ENCODE measurements at regions of chr4 and their contacts with region 1.

Region 1: GRCh38 chr4:185754961-185755360 is 57.0 kb downstream of the SORBS2 start:
- DNase-seq: no peak
- ATAC-seq: no peak

Region 2: GRCh38 chr4:185534866-185535611 is 219.9 kb before region 1 on chr4 and contains the start of gene PDLIM3:
- intact Hi-C with region 1: no loop called
- DNase-seq: peak; percentile 82
- ATAC-seq: peak; percentile 91
- total RNA-seq, gene PDLIM3: 208 TPM

Region 3: GRCh38 chr4:185656467-185656931 is 98.5 kb before region 1 on chr4:
- intact Hi-C with region 1: loop called (anchors 10 kb)
- DNase-seq: peak; percentile 62
- ATAC-seq: peak; percentile 68

Region 4: DNA sequence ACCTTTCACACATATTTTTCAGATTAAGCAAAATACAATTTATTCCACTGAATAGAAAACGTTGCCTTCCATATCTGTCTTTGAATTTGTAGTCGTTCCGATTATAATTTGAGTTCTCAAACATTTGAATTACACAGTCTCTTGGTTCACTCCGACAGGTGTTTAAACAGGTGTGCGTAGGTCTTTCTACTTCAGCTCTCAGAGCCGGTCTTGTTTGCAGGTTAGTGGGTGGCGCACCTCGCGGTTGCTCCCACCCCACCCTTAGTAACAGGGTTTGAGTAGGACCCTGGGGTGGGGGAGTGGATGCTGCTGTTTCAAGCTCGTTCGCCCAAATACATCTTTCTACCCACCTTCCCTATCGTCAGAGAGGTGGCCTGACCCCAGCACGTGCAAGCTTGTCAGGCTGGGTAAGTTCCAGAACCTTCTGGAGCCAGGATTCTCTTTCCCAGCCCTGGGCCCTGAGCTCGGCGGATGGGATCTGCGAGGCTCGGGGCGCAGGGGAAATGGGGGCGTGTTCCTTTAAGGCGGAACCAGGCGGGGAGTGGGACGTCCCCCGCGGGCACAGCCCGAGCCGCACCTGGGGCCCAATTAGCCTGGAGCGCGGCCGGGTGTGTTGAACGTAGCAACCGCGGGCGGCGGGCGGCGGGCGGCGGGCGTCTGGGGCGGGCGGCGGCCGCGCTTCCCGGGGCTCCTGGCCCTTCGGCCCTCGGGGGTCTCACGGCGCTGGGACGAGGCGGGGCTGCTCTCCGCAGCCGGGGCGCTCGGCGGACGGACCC is 349.3 kb after region 1 on chr4 and contains the start of gene FAM149A:
- intact Hi-C with region 1: no loop called
- DNase-seq: no peak
- ATAC-seq: peak; percentile 72
- total RNA-seq, gene FAM149A: 14.6 TPM